RWPE1 (cell line): ENCODE measurements at regions of chr1 and their contacts with region 1.

Region 1: DNA sequence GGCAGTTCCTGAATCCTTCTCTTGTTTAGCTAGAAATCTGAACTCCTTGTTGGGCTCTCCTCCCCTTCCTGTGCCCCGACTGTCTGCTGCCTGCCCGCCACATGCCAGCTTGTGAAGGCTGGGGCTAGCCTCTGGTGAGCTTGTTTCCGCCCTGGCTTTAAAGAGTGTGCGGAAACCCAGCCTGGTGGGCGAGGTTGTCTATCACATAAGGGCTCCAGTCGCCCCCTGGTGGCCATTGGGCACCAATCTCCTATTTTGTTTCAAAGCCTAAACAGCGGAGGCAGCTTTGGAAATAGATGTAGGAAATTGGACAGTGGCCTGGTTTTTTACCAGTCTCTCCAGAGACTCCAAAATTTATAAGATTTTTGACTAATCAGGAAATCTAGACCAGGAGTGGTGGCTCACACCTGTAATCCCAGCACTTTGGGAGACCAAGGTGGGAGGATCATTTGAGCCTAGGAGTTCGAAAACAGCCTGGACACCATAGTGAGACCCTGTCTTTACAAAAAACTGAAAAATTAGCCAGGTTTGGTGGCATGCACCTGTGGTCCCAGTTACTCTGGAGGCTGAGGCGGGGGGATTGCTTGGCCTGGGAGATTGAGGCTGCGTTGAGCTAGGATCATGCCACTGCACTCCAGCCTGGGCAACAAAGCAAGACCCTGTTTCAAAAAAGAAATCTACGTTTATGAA is 9.8 kb downstream of the ATP8B2 start:
- DNase-seq: peak; percentile 72
- H3K27ac ChIP-seq: peak overlapping the region; percentile 66
- CTCF ChIP-seq: peak; percentile 86

Region 2: DNA sequence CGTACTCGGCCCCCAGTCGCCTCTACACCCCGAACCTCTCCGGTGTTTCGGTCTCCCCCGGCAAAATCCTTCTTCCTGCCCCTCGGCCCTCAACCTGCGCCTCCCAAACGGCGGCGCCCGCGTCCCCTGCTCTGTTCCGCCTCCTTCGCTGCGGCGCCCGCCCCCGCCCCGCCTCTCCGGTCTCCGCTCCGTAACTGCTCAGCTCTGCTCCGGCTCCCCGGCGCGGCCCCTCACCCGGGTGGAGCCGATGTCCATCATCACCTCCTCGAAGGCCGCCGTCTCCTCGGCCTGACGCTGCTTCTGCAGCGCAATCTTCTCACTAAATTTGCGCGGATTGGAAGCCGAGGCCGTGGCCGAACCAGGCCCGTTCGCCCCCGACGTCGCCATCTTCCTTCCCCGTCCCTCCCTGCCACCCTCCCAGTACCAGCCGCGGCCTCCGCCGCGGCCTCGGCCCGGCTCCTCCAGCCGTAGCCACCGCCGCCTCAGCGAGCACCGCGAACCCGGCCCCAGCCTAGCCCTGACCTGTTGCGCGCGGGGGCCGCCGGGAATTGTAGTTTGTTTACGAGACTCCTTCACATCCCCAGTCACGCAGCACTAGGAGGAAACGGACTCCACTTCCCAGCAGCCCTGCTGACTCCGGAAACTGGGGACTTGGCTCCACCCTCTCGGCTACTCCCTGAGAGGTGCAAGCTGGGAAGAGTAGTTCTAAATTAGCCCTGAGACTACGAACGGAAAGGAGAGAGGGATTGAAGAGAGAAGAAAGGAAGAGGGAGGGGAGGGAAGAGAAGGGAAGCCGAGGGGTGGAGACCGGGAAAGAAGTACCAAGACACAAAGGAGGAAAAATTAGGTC is 376.8 kb before region 1 on chr1 and contains the start of gene CRTC2:
- CTCF ChIA-PET with region 1: no interaction called
- POLR2A ChIA-PET with region 1: no interaction called
- DNase-seq: peak; percentile 97
- H3K27ac ChIP-seq: peak within 1 kb of the TSS; percentile 90
- CTCF ChIP-seq: no peak

Region 3: DNA sequence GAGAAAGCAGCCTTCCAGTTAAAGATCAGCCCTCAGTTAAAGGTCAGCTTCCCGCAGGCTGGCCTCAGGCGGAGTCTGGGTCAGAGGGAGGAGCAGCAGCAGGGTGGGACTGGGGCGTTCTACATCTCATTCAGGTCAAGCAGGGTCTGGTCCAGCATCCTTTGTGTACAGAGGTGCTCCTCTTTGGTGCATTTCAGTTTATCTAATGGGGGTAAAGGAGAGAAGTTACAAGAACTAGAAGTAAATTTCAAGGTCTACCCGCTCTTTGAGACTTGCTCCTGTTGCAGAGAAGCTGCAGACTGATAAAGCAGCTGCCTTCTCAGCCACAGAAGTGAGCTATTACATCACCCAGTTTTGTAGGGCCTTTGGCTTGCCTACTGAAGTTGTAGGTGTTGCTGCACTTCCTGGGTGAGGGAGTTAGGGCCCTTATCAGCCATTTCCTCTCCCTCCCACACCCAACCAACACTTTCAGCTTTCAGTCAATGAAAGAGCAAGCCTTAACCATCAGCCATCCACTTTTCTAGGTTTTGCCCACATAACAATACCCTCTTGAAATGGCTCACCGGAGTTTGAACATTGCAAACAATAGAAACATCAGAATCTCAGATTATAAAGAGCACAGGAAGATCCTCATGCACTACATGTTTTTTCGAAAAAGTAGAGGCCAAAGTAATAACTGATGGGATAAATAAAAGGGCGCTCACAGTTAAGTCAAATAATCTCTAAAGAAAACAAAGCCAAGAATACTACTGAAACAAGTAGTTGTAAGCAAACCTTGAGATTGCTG is 177.5 kb before region 1 on chr1:
- CTCF ChIA-PET with region 1: no interaction called
- POLR2A ChIA-PET with region 1: no interaction called
- DNase-seq: no peak
- H3K27ac ChIP-seq: peak overlapping the region; percentile 44
- CTCF ChIP-seq: no peak

Region 4: DNA sequence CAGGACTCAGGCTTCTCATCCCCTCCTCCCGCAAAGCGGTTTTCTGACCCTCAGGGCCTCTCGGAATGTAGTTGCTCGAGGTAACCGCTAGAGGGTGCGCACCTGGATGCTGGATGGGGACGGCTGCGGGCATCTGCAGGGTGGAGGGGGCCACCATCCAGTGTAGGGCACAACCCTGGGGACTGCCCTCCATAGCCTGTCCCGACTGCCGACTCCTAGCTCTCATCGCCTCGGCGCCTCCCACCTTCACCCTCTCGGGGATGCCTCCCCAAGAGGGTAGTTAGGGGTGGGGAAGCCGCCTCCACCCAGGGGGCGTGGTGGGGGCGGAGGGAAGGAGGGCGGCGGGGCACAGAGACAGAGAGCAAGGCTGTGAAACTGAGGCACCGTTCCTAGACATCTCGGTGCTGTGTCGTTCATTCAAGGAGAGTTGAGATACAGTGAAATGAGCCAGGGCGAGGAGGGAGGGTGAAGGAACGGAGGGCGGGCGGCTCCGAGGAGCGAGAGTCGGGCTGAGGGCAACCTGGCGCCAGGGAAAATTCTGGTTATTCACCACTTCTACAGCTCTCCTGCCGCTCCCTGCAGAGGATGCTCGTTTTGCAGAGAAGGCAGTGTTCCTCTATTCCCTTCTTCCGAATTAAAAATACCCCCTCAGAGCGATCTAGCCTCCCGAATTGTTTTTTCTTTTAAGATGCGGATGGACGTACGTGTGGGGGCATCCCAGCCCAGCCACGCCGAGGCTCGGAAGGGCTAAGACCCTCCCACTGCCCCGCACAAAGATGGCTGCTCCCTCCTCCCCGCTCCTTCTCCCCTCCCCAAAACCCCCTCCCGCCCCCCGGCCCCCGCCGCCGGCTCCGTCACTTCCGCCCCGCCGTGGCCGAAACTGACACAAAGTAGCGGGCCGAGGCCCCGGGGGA is 10.2 kb before region 1 on chr1 and contains the start of gene ATP8B2:
- CTCF ChIA-PET with region 1: interaction called, 29 read pairs
- POLR2A ChIA-PET with region 1: no interaction called
- DNase-seq: peak; percentile 85
- H3K27ac ChIP-seq: peak within 1 kb of the TSS; percentile 99
- CTCF ChIP-seq: peak; percentile 92

Region 5: GRCh38 chr1:154344977-154345837 is 10.0 kb after region 1 on chr1:
- CTCF ChIA-PET with region 1: interaction called, 14 read pairs
- POLR2A ChIA-PET with region 1: interaction called, 3 read pairs
- DNase-seq: no peak
- H3K27ac ChIP-seq: no peak overlapping the region
- CTCF ChIP-seq: peak; percentile 69

Region 6: GRCh38 chr1:154431586-154432373 is 96.6 kb after region 1 on chr1:
- CTCF ChIA-PET with region 1: no interaction called
- POLR2A ChIA-PET with region 1: no interaction called
- DNase-seq: peak; percentile 75
- H3K27ac ChIP-seq: peak overlapping the region; percentile 90
- CTCF ChIP-seq: no peak